ENCODE measurements at regions of chr17 and their contacts with region 1.

Region 1: DNA sequence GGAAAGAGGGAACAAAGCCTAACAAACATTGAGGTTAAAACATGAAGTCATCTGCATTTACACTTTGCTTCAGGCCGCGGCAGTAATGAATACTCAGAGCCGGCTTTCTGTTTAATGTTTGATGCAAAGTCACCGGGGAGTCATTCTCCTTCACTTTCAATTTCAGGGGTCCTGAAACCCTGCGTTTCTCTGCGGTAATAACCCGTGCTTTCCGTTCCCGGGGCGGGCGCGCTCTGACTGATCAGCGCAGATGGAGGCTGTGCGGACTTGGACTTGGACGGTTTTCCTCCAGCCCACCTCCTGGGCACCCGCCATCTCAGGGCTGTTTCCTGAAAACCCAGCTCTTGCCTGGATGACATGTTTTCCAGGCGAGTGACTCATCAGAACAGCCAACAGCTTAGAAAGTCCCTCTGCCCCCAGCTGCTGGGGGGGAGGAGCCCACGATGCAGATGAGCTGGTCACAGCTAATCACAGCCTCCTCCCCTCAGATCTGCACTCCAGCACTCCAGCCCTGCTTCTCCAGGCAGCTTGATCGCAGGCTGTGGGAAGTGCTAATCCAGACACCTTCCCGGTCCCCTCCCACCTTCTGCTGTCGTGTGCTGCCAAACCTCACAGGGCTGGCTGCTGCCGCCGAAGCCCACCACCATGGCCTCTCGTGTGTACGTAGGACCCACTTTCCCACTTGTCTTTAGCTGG is 158.6 kb upstream of the CHMP6 start:
- DNase-seq: peak; percentile 89
- ATAC-seq: peak; percentile 90
- H3K4me3 ChIP-seq: peak overlapping the region; percentile 51 to 73 (median 66)
- H3K4me3 Mint-ChIP-seq: peak overlapping the region; percentile 95
- H3K27ac ChIP-seq: peak overlapping the region; percentile 82 to 96
- H3K27ac Mint-ChIP-seq: peak overlapping the region; percentile 98
- H3K4me1 ChIP-seq: peaks cover 12 to 17% of the 10 kb centered on the region in 2 donors
- H3K4me1 Mint-ChIP-seq: peaks cover 23% of the 10 kb centered on the region
- H3K27me3 ChIP-seq: no peaks in the 10 kb centered on the region
- H3K27me3 Mint-ChIP-seq: no peaks in the 10 kb centered on the region
- CTCF ChIP-seq: no peak

Region 2: GRCh38 chr17:80619535-80620312 is 213.3 kb before region 1 on chr17:
- CTCF ChIA-PET with region 1: no interaction called
- POLR2A ChIA-PET with region 1: no interaction called
- intact Hi-C with region 1: no loop called
- DNase-seq: no peak
- ATAC-seq: no peak
- H3K4me3 ChIP-seq: no peak overlapping the region
- H3K4me3 Mint-ChIP-seq: no peak overlapping the region
- H3K27ac ChIP-seq: no peak overlapping the region
- H3K27ac Mint-ChIP-seq: no peak overlapping the region
- H3K4me1 ChIP-seq: no peaks in the 10 kb centered on the region
- H3K4me1 Mint-ChIP-seq: peaks cover 15% of the 10 kb centered on the region
- H3K27me3 ChIP-seq: no peaks in the 10 kb centered on the region
- H3K27me3 Mint-ChIP-seq: no peaks in the 10 kb centered on the region
- CTCF ChIP-seq: no peak

Region 3: DNA sequence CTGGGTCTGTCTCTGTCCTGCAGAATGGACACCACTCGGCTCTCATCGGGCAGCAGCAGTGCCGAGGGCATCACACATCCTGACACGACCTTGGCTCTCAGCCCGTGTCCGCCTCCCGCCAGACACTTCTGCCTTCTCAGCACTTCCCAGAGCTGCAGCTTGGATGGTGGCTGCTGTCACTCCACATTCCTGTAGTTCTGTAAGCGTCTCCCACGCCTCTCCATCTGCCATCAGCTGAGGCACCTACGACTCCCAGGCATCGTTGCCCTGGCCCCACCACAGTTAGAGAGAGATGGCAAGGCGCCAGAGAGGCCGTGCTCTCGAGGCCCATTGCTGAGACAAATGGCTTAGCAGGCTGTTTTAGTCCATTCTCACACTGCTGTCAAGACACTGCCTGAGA is 37.3 kb before region 1 on chr17:
- CTCF ChIA-PET with region 1: no interaction called
- POLR2A ChIA-PET with region 1: no interaction called
- intact Hi-C with region 1: no loop called
- DNase-seq: no peak
- ATAC-seq: no peak
- H3K4me3 ChIP-seq: no peak overlapping the region
- H3K4me3 Mint-ChIP-seq: no peak overlapping the region
- H3K27ac ChIP-seq: no peak overlapping the region
- H3K27ac Mint-ChIP-seq: no peak overlapping the region
- H3K4me1 ChIP-seq: no peaks in the 10 kb centered on the region
- H3K4me1 Mint-ChIP-seq: peaks cover 4% of the 10 kb centered on the region
- H3K27me3 ChIP-seq: no peaks in the 10 kb centered on the region
- H3K27me3 Mint-ChIP-seq: no peaks in the 10 kb centered on the region
- CTCF ChIP-seq: no peak

Region 4: DNA sequence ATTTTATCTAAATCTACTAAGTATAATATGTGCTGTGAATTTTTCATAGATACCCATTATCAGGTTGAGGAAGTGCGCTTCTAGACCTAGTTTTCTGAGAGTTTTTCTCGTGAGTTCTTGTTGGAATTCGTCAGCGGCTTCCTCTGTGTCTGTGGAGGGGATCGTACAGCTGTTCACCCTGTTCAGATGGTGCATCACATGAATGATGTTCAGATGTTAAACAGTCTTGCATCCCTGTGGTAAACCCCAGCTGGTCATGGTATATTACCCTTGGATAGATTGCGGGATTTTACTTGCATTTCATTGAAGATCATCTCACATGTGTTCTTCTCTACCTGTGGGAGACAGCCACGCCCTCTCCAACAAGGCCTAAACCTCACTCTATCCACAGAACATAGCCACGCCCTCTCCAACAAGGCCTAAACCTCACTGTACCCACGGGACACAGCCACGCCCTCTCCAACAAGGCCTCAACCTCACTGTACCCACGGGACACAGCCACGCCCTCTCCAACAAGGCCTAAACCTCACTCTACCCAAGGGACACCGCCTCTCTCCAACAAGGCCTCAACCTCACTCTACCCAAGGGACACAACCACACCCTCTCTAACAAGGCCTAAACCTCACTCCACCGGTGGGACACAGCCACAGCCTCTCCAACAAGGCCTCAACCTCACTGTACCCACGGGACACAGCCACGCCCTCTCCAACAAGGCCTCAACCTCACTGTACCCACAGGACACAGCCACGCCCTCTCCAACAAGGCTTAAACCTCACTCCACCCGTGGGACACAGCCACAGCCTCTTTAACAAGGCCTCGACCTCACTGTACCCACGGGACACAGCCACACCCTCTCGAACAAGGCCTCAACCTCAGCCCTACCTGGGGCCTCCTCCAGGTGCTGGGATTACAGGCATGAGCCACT is 21.6 kb before region 1 on chr17:
- CTCF ChIA-PET with region 1: interaction called, 3 read pairs
- POLR2A ChIA-PET with region 1: no interaction called
- intact Hi-C with region 1: loop called (anchors 2 kb)
- DNase-seq: peak; percentile 49
- ATAC-seq: peak; percentile 93
- H3K4me3 ChIP-seq: no peak overlapping the region
- H3K4me3 Mint-ChIP-seq: peak overlapping the region; percentile 50
- H3K27ac ChIP-seq: peak overlapping the region in 1 of 2 donors; percentile 33
- H3K27ac Mint-ChIP-seq: peak overlapping the region; percentile 86
- H3K4me1 ChIP-seq: peaks cover 11 to 16% of the 10 kb centered on the region in 2 donors
- H3K4me1 Mint-ChIP-seq: peaks cover 23% of the 10 kb centered on the region
- H3K27me3 ChIP-seq: no peaks in the 10 kb centered on the region
- H3K27me3 Mint-ChIP-seq: no peaks in the 10 kb centered on the region
- CTCF ChIP-seq: no peak